IMR-90 (cell line): ENCODE measurements at regions of chr3 and their contacts with region 1.

Region 1: GRCh38 chr3:7950890-7951289 is 550.7 kb upstream of the LMCD1 start:
- DNase-seq: no peak
- ATAC-seq: no peak
- H3K4me3 ChIP-seq: no peak overlapping the region
- H3K27ac ChIP-seq: no peak overlapping the region
- H3K4me1 ChIP-seq: no peaks in the 10 kb centered on the region
- H3K27me3 ChIP-seq: no peaks in the 10 kb centered on the region
- CTCF ChIP-seq: no peak
- POLR2A ChIP-seq: no peak
- RAD21 ChIP-seq: no peak

Region 2: GRCh38 chr3:8052659-8053058 is 101.8 kb after region 1 on chr3:
- CTCF ChIA-PET with region 1: interaction called, 11 read pairs
- POLR2A ChIA-PET with region 1: no interaction called
- dilution Hi-C with region 1: no loop called
- in situ Hi-C with region 1: no loop called
- intact Hi-C with region 1: no loop called
- DNase-seq: no peak
- ATAC-seq: no peak
- H3K4me3 ChIP-seq: no peak overlapping the region
- H3K27ac ChIP-seq: no peak overlapping the region
- H3K4me1 ChIP-seq: no peaks in the 10 kb centered on the region
- H3K27me3 ChIP-seq: no peaks in the 10 kb centered on the region
- CTCF ChIP-seq: no peak
- POLR2A ChIP-seq: no peak
- RAD21 ChIP-seq: no peak